Activated T-helper 2 cell treated with anti-CD3 and anti-CD28 coated beads, Interferon-gamma antibody, Interleukin-2, Interleukin-4, amounts not matched to agents 10 μg/mL and 5 μg/mL and 100 μg/mL, durations not matched to agents 14 hours and 24 hours and 36 hours (primary cell): ENCODE measurements at regions of chr10 and their contacts with region 1.

Region 1: DNA sequence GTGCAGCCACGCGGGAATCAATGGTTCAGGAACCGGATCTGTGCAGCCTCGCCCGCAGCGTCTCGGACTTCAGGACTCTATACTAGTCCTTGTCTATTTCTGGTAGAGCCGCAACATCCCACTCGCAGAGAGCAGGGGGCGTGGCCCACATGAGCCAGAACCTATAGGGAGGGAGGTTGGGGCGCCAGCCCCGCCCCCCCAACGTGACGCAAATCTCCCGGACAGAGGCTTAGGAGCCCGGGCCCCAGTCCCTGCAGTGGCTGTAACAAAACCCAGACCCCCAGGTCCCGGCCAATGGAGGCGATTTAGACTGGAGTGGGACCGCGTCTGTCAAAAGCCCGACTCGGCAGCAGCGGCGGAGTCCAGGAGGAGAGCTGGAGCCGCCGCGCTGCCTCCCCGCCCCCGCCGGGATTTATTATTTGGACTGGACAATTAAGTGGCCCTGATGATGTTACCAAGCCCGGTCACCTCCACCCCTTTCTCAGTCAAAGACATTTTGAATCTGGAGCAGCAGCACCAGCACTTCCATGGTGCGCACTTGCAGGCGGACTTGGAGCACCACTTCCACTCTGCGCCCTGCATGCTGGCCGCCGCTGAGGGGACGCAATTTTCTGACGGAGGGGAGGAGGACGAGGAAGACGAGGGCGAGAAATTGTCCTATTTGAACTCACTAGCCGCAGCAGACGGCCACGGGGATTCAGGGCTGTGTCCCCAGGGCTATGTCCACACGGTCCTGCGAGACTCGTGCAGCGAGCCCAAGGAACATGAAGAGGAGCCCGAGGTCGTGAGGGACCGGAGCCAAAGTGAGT is at the start of gene NKX2-3:
- DNase-seq: no peak
- H3K4me3 Mint-ChIP-seq: no peak within 1 kb of the TSS
- H3K27ac Mint-ChIP-seq: no peak within 1 kb of the TSS
- H3K4me1 Mint-ChIP-seq: peaks cover 16% of the 10 kb centered on the region
- H3K27me3 Mint-ChIP-seq: peaks cover 89% of the 10 kb centered on the region
- total RNA-seq, gene NKX2-3: not detected in 2 replicates

Region 2: DNA sequence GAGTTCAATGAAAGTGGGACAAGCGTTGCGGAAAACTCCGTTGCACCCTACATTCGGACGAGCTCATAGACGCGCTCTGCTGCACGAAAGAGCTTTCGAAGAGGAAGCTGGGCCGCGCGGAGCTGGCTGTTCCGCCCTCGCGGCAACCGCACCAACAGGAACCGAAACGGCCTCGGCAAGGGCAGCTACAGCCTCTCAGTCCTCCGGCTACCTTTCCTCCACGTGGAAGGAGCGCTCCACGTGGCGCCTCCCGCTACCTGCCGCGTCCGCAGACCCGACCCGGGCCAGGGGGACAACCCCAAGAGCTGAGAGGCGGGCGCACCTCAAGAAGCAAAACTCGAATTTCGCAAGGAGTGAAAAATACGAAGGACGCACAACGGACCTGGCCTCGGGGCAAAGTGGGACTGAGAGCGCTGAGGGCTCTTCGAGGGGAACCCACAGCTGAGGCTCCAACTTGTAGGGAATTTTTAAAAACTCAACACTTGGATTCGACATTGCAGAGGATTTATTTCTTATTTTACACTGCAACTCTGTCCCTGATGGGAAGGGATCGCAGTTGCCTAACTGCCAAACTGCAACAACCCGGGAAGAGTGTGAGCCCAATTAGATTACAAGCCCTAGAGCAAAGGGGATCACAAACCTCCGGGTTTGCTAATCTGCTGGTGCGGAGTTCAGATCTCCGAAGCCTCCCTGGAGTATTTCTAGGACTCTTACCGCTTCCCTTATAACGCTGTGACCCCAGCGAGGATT is 298.7 kb before region 1 on chr10:
- intact Hi-C with region 1: loop called (anchors 5 kb)
- DNase-seq: peak; percentile 44
- H3K4me3 Mint-ChIP-seq: peak overlapping the region; percentile 64
- H3K27ac Mint-ChIP-seq: no peak overlapping the region
- H3K4me1 Mint-ChIP-seq: peaks cover 23% of the 10 kb centered on the region
- H3K27me3 Mint-ChIP-seq: peaks cover 88% of the 10 kb centered on the region